Uterus (tissue), 4 donors: ENCODE measurements at regions of chr6 and their contacts with region 1.

Region 1: GRCh38 chr6:42493914-42494539 is 42.3 kb upstream of the TRERF1 start:
- DNase-seq: no peak
- H3K4me3 ChIP-seq: no peak overlapping the region
- H3K27ac ChIP-seq: no peak overlapping the region
- H3K4me1 ChIP-seq: no peaks in the 10 kb centered on the region
- H3K27me3 ChIP-seq: no peaks in the 10 kb centered on the region
- CTCF ChIP-seq: no peak
- POLR2A ChIP-seq: no peak

Region 2: GRCh38 chr6:44010411-44011349 is 1516.7 kb after region 1 on chr6:
- intact Hi-C with region 1: loop called (anchors 5 kb)
- DNase-seq: peak in 1 of 2 donors; percentile 19
- H3K4me3 ChIP-seq: no peak overlapping the region
- H3K27ac ChIP-seq: peak overlapping the region in 1 of 2 donors; percentile 53
- H3K4me1 ChIP-seq: no peaks in the 10 kb centered on the region
- H3K27me3 ChIP-seq: no peaks in the 10 kb centered on the region
- CTCF ChIP-seq: no peak
- POLR2A ChIP-seq: no peak